Endothelial cell of umbilical vein (primary cell): ENCODE measurements at regions of chr7 and their contacts with region 1.

Region 1: GRCh38 chr7:117458977-117459583 is 20.7 kb upstream of the CFTR start:
- DNase-seq: peak; percentile 26
- H3K4me3 ChIP-seq: no peak overlapping the region
- H3K27ac ChIP-seq: no peak overlapping the region
- H3K4me1 ChIP-seq: no peaks in the 10 kb centered on the region
- H3K27me3 ChIP-seq: no peaks in the 10 kb centered on the region
- CTCF ChIP-seq: peak; percentile 35 to 42
- POLR2A ChIP-seq: no peak

Region 2: GRCh38 chr7:117132321-117133120 is 326.6 kb before region 1 on chr7:
- CTCF ChIA-PET with region 1: no interaction called
- POLR2A ChIA-PET with region 1: no interaction called
- dilution Hi-C with region 1: no loop called
- intact Hi-C with region 1: no loop called
- DNase-seq: peak; percentile 74
- H3K4me3 ChIP-seq: no peak overlapping the region
- H3K27ac ChIP-seq: peak overlapping the region; percentile 88
- H3K4me1 ChIP-seq: peaks cover 22% of the 10 kb centered on the region
- H3K27me3 ChIP-seq: no peaks in the 10 kb centered on the region
- CTCF ChIP-seq: no peak
- POLR2A ChIP-seq: no peak

Region 3: GRCh38 chr7:117219485-117219884 is 239.6 kb before region 1 on chr7:
- CTCF ChIA-PET with region 1: no interaction called
- POLR2A ChIA-PET with region 1: no interaction called
- dilution Hi-C with region 1: no loop called
- intact Hi-C with region 1: no loop called
- DNase-seq: no peak
- H3K4me3 ChIP-seq: no peak overlapping the region
- H3K27ac ChIP-seq: no peak overlapping the region
- H3K4me1 ChIP-seq: no peaks in the 10 kb centered on the region
- H3K27me3 ChIP-seq: no peaks in the 10 kb centered on the region
- CTCF ChIP-seq: no peak
- POLR2A ChIP-seq: no peak

Region 4: DNA sequence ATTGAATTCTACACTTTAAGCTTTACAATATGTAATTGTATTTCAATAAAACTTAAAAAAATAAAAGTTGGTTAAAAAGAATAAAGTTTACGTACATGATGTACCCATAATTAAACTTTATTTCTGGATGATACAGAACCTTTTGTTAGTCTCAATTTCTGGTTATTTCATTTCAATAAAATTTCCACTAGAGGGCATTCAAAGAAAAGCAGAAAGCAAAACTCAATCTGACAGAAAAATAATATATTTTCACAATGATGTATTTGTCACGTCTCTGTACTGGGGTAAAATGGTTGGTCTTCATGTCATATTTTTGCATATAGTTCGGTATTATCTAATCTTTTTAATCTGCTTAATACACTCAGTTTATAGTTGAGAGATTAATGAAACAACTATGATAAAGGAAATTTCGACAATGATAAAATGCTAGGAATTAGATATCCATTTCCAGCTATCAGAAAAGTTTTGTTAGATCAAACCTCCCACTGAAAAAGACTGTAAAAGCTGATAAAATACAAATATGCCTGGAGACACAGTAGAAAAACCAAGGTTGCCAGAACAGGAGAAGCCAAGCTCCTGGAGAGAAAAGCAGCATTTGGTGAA is 59.2 kb before region 1 on chr7:
- CTCF ChIA-PET with region 1: interaction called, 10 read pairs
- POLR2A ChIA-PET with region 1: no interaction called
- dilution Hi-C with region 1: no loop called
- intact Hi-C with region 1: no loop called
- DNase-seq: no peak
- H3K4me3 ChIP-seq: no peak overlapping the region
- H3K27ac ChIP-seq: no peak overlapping the region
- H3K4me1 ChIP-seq: no peaks in the 10 kb centered on the region
- H3K27me3 ChIP-seq: peaks cover 4 to 6% of the 10 kb centered on the region in 2 experiments
- CTCF ChIP-seq: peak in 1 of 2 donors; percentile 13
- POLR2A ChIP-seq: no peak

Region 5: DNA sequence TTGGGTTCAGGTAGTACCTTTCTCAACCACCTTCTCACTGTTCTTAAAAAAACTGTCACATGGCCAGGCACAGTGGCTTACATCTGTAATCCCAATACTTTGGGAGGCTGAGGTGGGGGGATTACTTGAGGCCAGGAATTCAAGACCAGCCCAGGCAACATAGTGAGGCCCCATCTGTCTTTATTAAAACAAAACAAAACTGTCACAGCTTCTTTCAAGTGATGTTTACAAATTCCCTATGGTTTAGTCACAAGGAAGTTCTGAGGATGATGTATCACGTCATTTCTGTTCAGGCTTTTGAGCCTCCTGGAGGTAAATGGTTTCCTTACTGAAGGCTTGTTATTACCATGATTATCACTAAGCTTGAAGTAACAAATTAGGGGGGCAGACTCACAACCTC is 206.9 kb after region 1 on chr7:
- CTCF ChIA-PET with region 1: interaction called, 67 read pairs
- POLR2A ChIA-PET with region 1: no interaction called
- dilution Hi-C with region 1: no loop called
- intact Hi-C with region 1: no loop called
- DNase-seq: peak; percentile 67
- H3K4me3 ChIP-seq: no peak overlapping the region
- H3K27ac ChIP-seq: peak overlapping the region; percentile 62
- H3K4me1 ChIP-seq: peaks cover 14% of the 10 kb centered on the region
- H3K27me3 ChIP-seq: no peaks in the 10 kb centered on the region
- CTCF ChIP-seq: no peak
- POLR2A ChIP-seq: no peak

Region 6: GRCh38 chr7:117686311-117686935 is 227.3 kb after region 1 on chr7:
- CTCF ChIA-PET with region 1: interaction called, 13 read pairs
- POLR2A ChIA-PET with region 1: no interaction called
- dilution Hi-C with region 1: no loop called
- intact Hi-C with region 1: no loop called
- DNase-seq: no peak
- H3K4me3 ChIP-seq: no peak overlapping the region
- H3K27ac ChIP-seq: no peak overlapping the region
- H3K4me1 ChIP-seq: no peaks in the 10 kb centered on the region
- H3K27me3 ChIP-seq: peaks cover 6 to 16% of the 10 kb centered on the region in 2 experiments
- CTCF ChIP-seq: no peak
- POLR2A ChIP-seq: no peak

Region 7: GRCh38 chr7:117724898-117725297 is 265.8 kb after region 1 on chr7:
- CTCF ChIA-PET with region 1: interaction called, 34 read pairs
- POLR2A ChIA-PET with region 1: no interaction called
- dilution Hi-C with region 1: no loop called
- intact Hi-C with region 1: no loop called
- DNase-seq: no peak
- H3K4me3 ChIP-seq: no peak overlapping the region
- H3K27ac ChIP-seq: no peak overlapping the region
- H3K4me1 ChIP-seq: no peaks in the 10 kb centered on the region
- H3K27me3 ChIP-seq: no peaks in the 10 kb centered on the region
- CTCF ChIP-seq: no peak
- POLR2A ChIP-seq: no peak